ENCODE measurements at regions of chrX and their contacts with region 1.

Region 1: GRCh38 chrX:19086102-19086772 is 36.0 kb downstream of the ADGRG2 start:
- DNase-seq: no peak
- ATAC-seq: peak; percentile 32

Region 2: GRCh38 chrX:19017271-19017670 is 69.0 kb before region 1 on chrX:
- intact Hi-C with region 1: no loop called
- DNase-seq: no peak
- ATAC-seq: no peak

Region 3: GRCh38 chrX:20071511-20072079 is 985.4 kb after region 1 on chrX:
- intact Hi-C with region 1: loop called (anchors 10 kb)
- DNase-seq: no peak
- ATAC-seq: no peak

Measured in sciatic nerve (tissue), 2 donors.